Common myeloid progenitor, CD34-positive (primary cell): ENCODE measurements at regions of chr11 and their contacts with region 1.

Region 1: GRCh38 chr11:72030472-72031045 is 31.9 kb downstream of the IL18BP start:
- DNase-seq: no peak
- H3K4me3 ChIP-seq: no peak overlapping the region
- H3K27ac ChIP-seq: no peak overlapping the region
- H3K4me1 ChIP-seq: peaks cover 0 to 5% (median 1%) of the 10 kb centered on the region in 4 experiments
- H3K27me3 ChIP-seq: no peaks in the 10 kb centered on the region

Region 2: DNA sequence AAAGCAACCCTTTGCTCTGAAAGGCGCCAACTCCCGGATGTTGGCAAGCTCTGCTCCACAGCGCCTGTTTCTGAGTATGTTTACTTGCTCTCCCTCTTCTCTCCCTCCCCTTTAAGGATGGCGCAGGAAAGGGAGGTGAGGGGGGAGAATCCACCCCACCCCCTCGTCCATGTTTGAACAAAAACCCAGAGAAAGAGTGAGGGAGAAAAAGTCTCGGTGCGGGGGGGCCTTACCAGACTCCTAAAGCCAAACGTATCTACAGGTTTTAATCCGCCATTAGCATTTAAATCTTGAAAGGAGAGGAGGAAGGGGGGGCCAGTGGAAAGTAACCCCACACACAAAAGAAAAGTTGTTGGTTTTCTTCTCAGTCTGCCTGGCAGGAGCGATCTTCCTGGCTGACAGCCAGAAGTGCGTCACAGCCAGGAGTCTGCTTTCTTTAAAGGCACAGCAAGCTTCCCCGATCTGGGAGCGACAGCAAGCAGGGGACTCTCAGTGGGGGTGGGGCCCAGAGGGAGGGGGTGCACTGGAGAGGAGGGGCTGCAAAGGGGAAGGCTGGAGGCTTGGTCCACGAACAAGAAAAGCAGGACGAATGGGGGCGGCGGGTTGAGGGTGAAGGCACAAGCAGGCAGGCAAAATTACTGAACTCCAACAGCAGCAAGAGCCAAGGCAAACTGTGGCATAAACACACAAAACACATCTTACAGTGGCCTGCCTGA is 10.3 kb after region 1 on chr11:
- CTCF ChIA-PET with region 1: interaction called, 87 read pairs
- POLR2A ChIA-PET with region 1: interaction called, 6 read pairs
- DNase-seq: peak; percentile 90 to 94 (median 94)
- H3K4me3 ChIP-seq: peak overlapping the region; percentile 67 to 93 (median 82)
- H3K27ac ChIP-seq: peak overlapping the region; percentile 91 to 95
- H3K4me1 ChIP-seq: peaks cover 19 to 65% (median 50%) of the 10 kb centered on the region in 4 experiments
- H3K27me3 ChIP-seq: no peaks in the 10 kb centered on the region

Region 3: GRCh38 chr11:72080256-72080974 is 49.9 kb after region 1 on chr11 and contains the starts of genes LRRC51 and NUMA1:
- CTCF ChIA-PET with region 1: interaction called, 57 read pairs
- POLR2A ChIA-PET with region 1: interaction called, 10 read pairs
- DNase-seq: peak; percentile 100
- H3K4me3 ChIP-seq: peak within 1 kb of the TSS; percentile 77 to 93 (median 85)
- H3K27ac ChIP-seq: peak within 1 kb of the TSS; percentile 74 to 90
- H3K4me1 ChIP-seq: peaks cover 10 to 47% (median 33%) of the 10 kb centered on the region in 4 experiments
- H3K27me3 ChIP-seq: no peaks in the 10 kb centered on the region

Region 4: GRCh38 chr11:72144807-72145560 is 114.4 kb after region 1 on chr11:
- CTCF ChIA-PET with region 1: interaction called, 46 read pairs
- POLR2A ChIA-PET with region 1: interaction called, 3 read pairs
- DNase-seq: no peak
- H3K4me3 ChIP-seq: no peak overlapping the region
- H3K27ac ChIP-seq: no peak overlapping the region
- H3K4me1 ChIP-seq: peaks cover 0 to 4% (median 2%) of the 10 kb centered on the region in 4 experiments
- H3K27me3 ChIP-seq: no peaks in the 10 kb centered on the region